Activated CD4-positive, alpha-beta memory T cell treated with anti-CD3 and anti-CD28 coated beads for 36 hours (primary cell): ENCODE measurements at regions of chr20 and their contacts with region 1.

Region 1: GRCh38 chr20:23420943-23421931 is at the start of gene NAPB:
- DNase-seq: peak; percentile 95
- H3K4me3 Mint-ChIP-seq: peak within 1 kb of the TSS; percentile 80
- H3K27ac Mint-ChIP-seq: peak within 1 kb of the TSS; percentile 73
- H3K4me1 Mint-ChIP-seq: peaks cover 26% of the 10 kb centered on the region
- H3K27me3 Mint-ChIP-seq: peaks cover 7% of the 10 kb centered on the region
- total RNA-seq, gene NAPB: 7.3 to 7.6 TPM

Region 2: GRCh38 chr20:23086056-23086566 is 335.1 kb before region 1 on chr20 and contains the start of gene CD93:
- CTCF ChIA-PET with region 1: no interaction called
- POLR2A ChIA-PET with region 1: no interaction called
- intact Hi-C with region 1: no loop called
- DNase-seq: peak; percentile 60
- H3K4me3 Mint-ChIP-seq: peak within 1 kb of the TSS; percentile 35
- H3K27ac Mint-ChIP-seq: peak within 1 kb of the TSS; percentile 51
- H3K4me1 Mint-ChIP-seq: peaks cover 11% of the 10 kb centered on the region
- H3K27me3 Mint-ChIP-seq: peaks cover 2% of the 10 kb centered on the region
- total RNA-seq, gene CD93: 1.8 to 1.9 TPM

Region 3: DNA sequence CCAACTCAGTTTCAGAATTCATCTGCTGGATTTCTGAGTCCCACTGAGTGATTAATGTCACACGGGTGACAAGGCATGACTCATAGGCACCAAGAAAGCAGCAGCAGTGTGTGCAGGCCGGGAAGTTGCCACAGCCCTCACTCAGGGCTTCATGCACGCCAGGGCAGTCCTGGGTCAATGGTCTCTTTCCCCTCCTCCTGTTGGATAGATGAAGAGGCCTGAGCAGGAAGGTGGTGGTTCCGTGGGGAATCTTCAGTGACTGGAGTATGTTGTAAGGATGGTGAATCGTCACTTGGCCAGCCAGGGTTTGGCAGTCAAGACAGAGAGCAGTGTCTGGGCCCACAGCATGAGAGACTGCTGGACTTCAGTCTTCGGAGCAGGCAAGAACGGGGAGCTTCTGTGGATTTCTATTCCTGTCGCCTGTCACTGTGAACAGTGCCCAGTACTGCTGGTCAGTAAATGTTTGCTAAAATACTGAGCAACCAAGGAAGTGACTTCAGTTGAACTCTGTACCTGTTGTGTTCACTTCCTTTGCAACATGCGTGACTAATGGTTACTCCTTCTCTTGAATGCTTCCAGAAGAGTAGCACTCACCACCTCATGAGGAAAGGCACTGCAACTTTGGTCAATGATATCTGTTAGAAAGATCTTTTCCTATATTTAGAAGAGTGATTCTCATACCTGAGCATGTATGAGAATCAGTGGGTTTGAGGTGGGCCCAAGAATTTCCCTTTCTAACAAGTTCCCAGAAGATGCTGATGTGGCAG is 273.1 kb before region 1 on chr20:
- CTCF ChIA-PET with region 1: no interaction called
- POLR2A ChIA-PET with region 1: no interaction called
- intact Hi-C with region 1: loop called (anchors 10 kb)
- DNase-seq: peak; percentile 69
- H3K4me3 Mint-ChIP-seq: no peak overlapping the region
- H3K27ac Mint-ChIP-seq: peak overlapping the region; percentile 83
- H3K4me1 Mint-ChIP-seq: peaks cover 12% of the 10 kb centered on the region
- H3K27me3 Mint-ChIP-seq: peaks cover 5% of the 10 kb centered on the region

Region 4: GRCh38 chr20:23200918-23201317 is 220.3 kb before region 1 on chr20:
- CTCF ChIA-PET with region 1: no interaction called
- POLR2A ChIA-PET with region 1: no interaction called
- intact Hi-C with region 1: no loop called
- DNase-seq: peak; percentile 13
- H3K4me3 Mint-ChIP-seq: no peak overlapping the region
- H3K27ac Mint-ChIP-seq: no peak overlapping the region
- H3K4me1 Mint-ChIP-seq: no peaks in the 10 kb centered on the region
- H3K27me3 Mint-ChIP-seq: peaks cover 17% of the 10 kb centered on the region

Region 5: DNA sequence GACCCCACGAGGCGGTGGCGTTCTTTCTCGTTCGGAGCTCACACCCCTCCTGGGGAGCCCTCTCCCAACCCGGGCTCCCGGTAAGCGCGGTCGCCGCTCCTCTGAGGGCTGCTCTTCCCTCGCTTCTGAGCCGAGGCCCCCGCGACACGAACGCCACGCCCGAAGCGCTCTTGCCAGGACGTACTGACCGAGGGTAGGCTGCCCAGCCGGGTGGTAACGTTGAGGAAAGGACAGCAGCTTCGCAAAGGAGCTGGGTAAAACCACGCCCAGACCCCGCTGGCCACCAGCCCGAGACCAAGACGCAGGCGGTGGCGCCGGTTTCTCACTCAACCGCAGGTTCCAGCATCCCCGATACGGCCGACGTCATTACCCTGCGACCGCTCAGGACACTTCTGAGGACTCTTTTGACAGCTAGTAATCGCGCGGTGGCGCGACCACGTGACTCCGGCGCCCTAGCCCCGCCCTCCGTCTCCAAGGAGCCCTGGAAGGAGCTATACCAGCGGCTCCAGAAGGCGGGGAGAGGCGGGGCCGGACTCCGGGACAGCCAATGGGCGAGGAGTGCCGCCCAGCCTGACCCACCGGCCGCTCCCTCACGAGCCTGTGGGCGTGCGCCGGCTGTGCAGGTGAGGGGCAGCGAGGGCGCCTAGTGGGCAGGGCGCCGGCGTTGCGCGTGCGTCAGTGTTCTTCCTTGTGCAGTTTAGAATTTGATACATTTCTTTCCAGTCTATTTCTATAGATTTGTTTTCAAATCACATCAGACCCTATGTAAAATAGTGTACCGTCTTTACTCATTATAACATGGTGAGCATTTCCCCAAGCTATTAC is 63.3 kb before region 1 on chr20:
- CTCF ChIA-PET with region 1: interaction called, 8 read pairs
- POLR2A ChIA-PET with region 1: interaction called, 5 read pairs
- intact Hi-C with region 1: loop called (anchors 1 kb)
- DNase-seq: peak; percentile 100
- H3K4me3 Mint-ChIP-seq: peak overlapping the region; percentile 92
- H3K27ac Mint-ChIP-seq: peak overlapping the region; percentile 93
- H3K4me1 Mint-ChIP-seq: peaks cover 19% of the 10 kb centered on the region
- H3K27me3 Mint-ChIP-seq: peaks cover 2% of the 10 kb centered on the region

Region 6: DNA sequence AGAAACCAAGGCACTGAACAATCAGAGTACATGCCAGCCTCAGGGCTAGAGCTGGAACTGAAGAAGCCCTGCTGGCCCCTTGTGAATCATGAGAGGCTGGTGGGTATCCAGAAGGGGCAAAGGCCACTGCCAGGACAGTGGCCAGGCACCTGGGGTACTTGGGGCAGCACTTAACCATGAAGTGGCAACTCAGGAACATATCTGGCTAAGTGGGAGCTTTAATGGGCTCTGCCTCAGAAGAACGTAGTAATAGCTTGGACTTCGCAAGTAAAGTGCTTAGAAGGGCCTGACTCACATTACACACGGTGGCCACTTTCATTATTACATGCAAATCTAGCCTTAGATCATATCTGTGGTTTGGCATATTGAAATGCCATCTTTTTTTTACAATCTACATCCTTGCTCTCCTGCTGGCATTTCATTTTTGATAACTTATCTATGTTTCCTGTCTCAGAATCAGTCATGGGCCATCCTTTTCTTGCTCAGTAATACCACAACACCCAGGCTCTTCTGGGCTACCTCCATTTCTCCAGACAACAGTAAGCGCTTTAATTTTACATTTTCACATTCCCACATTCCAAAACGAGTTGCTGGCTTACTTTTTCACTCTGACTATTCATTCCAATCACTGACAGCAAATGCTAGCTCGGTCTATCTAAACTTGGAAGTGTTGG is 21.5 kb before region 1 on chr20:
- CTCF ChIA-PET with region 1: interaction called, 16 read pairs
- POLR2A ChIA-PET with region 1: interaction called, 5 read pairs
- intact Hi-C with region 1: loop called (anchors 1 kb)
- DNase-seq: peak; percentile 27
- H3K4me3 Mint-ChIP-seq: no peak overlapping the region
- H3K27ac Mint-ChIP-seq: no peak overlapping the region
- H3K4me1 Mint-ChIP-seq: peaks cover 31% of the 10 kb centered on the region
- H3K27me3 Mint-ChIP-seq: no peaks in the 10 kb centered on the region

Region 7: GRCh38 chr20:23492292-23492691 is 71.1 kb after region 1 on chr20:
- CTCF ChIA-PET with region 1: no interaction called
- POLR2A ChIA-PET with region 1: interaction called, 4 read pairs
- intact Hi-C with region 1: loop called (anchors 10 kb)
- DNase-seq: peak; percentile 19
- H3K4me3 Mint-ChIP-seq: no peak overlapping the region
- H3K27ac Mint-ChIP-seq: no peak overlapping the region
- H3K4me1 Mint-ChIP-seq: peaks cover under 1% of the 10 kb centered on the region
- H3K27me3 Mint-ChIP-seq: no peaks in the 10 kb centered on the region